CD4-positive, alpha-beta memory T cell (primary cell): ENCODE measurements at regions of chr3 and their contacts with region 1.

Region 1: GRCh38 chr3:17742108-17742879 is at the start of gene TBC1D5:
- DNase-seq: peak; percentile 88 to 92 (median 91)
- H3K4me3 ChIP-seq: peak within 1 kb of the TSS; percentile 38 to 81
- H3K4me3 Mint-ChIP-seq: peak within 1 kb of the TSS; percentile 88 to 94 (median 92)
- H3K27ac ChIP-seq: peak within 1 kb of the TSS; percentile 54
- H3K27ac Mint-ChIP-seq: peak within 1 kb of the TSS; percentile 90 to 95 (median 92)
- H3K4me1 ChIP-seq: peaks cover 39% of the 10 kb centered on the region
- H3K4me1 Mint-ChIP-seq: peaks cover 29 to 53% (median 39%) of the 10 kb centered on the region in 4 donors
- H3K27me3 ChIP-seq: no peaks in the 10 kb centered on the region
- H3K27me3 Mint-ChIP-seq: no peaks in the 10 kb centered on the region
- total RNA-seq, gene TBC1D5: 46.6 to 52.2 TPM

Region 2: GRCh38 chr3:17672506-17672905 is 69.8 kb before region 1 on chr3:
- CTCF ChIA-PET with region 1: no interaction called
- POLR2A ChIA-PET with region 1: no interaction called
- intact Hi-C with region 1: no loop called
- DNase-seq: no peak
- H3K4me3 ChIP-seq: no peak overlapping the region
- H3K4me3 Mint-ChIP-seq: no peak overlapping the region
- H3K27ac ChIP-seq: no peak overlapping the region
- H3K27ac Mint-ChIP-seq: no peak overlapping the region
- H3K4me1 ChIP-seq: no peaks in the 10 kb centered on the region
- H3K4me1 Mint-ChIP-seq: peaks cover 0 to 5% (median 1%) of the 10 kb centered on the region in 4 donors
- H3K27me3 ChIP-seq: no peaks in the 10 kb centered on the region
- H3K27me3 Mint-ChIP-seq: no peaks in the 10 kb centered on the region

Region 3: DNA sequence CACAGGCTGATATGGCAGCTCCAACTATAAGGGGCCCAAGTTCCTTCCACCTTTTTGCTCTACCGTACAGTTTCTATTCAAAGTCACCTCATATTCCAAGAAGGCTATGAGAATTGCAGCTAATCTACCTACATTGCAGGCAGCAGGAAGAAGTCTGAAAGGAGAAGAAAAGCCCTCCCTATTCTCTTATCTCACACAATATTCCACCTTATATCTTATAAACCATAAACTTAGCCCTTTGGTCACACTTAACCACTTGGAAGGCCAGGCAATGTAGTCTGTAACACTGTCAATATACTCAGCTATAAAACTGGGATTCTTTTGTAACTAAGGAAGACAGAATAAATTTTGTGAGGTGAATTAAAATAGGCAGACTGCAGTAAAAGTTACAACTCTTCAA is 54.7 kb before region 1 on chr3:
- CTCF ChIA-PET with region 1: interaction called, 3 read pairs
- POLR2A ChIA-PET with region 1: interaction called, 20 read pairs
- intact Hi-C with region 1: loop called (anchors 2 kb)
- DNase-seq: no peak
- H3K4me3 ChIP-seq: no peak overlapping the region
- H3K4me3 Mint-ChIP-seq: no peak overlapping the region
- H3K27ac ChIP-seq: no peak overlapping the region
- H3K27ac Mint-ChIP-seq: peak overlapping the region in 1 of 7 donors; percentile 4
- H3K4me1 ChIP-seq: no peaks in the 10 kb centered on the region
- H3K4me1 Mint-ChIP-seq: peaks cover 4 to 11% (median 7%) of the 10 kb centered on the region in 4 donors
- H3K27me3 ChIP-seq: no peaks in the 10 kb centered on the region
- H3K27me3 Mint-ChIP-seq: no peaks in the 10 kb centered on the region

Region 4: GRCh38 chr3:17874632-17875031 is 132.3 kb after region 1 on chr3:
- CTCF ChIA-PET with region 1: no interaction called
- POLR2A ChIA-PET with region 1: no interaction called
- intact Hi-C with region 1: no loop called
- DNase-seq: no peak
- H3K4me3 ChIP-seq: no peak overlapping the region
- H3K4me3 Mint-ChIP-seq: no peak overlapping the region
- H3K27ac ChIP-seq: no peak overlapping the region
- H3K27ac Mint-ChIP-seq: no peak overlapping the region
- H3K4me1 ChIP-seq: no peaks in the 10 kb centered on the region
- H3K4me1 Mint-ChIP-seq: no peaks in the 10 kb centered on the region
- H3K27me3 ChIP-seq: no peaks in the 10 kb centered on the region
- H3K27me3 Mint-ChIP-seq: peaks cover 1 to 4% of the 10 kb centered on the region in 2 donors

Region 5: GRCh38 chr3:17891139-17891856 is 149.0 kb after region 1 on chr3:
- CTCF ChIA-PET with region 1: no interaction called
- POLR2A ChIA-PET with region 1: no interaction called
- intact Hi-C with region 1: no loop called
- DNase-seq: no peak
- H3K4me3 ChIP-seq: no peak overlapping the region
- H3K4me3 Mint-ChIP-seq: no peak overlapping the region
- H3K27ac ChIP-seq: no peak overlapping the region
- H3K27ac Mint-ChIP-seq: no peak overlapping the region
- H3K4me1 ChIP-seq: no peaks in the 10 kb centered on the region
- H3K4me1 Mint-ChIP-seq: no peaks in the 10 kb centered on the region
- H3K27me3 ChIP-seq: no peaks in the 10 kb centered on the region
- H3K27me3 Mint-ChIP-seq: peaks cover 2 to 4% of the 10 kb centered on the region in 2 donors

Region 6: DNA sequence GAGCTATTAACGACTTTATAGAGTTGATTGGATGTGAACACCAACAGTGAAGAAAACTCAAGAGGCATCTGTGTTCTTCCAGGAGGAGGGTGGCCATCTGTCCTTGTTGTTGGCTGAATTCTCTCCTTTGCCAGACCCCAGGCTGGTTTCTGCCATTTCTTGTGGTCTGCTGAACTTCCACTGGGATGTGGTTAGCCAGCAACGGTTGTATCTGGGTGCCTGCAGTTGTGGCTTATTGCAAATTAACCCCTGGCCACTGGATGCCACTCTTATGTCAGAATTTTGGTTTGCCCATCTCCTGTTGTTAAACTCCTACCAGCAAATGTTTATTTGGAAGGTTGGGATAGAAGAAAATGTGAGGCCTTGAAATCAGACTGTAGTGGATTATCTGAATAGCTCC is 163.7 kb after region 1 on chr3:
- CTCF ChIA-PET with region 1: no interaction called
- POLR2A ChIA-PET with region 1: no interaction called
- intact Hi-C with region 1: no loop called
- DNase-seq: no peak
- H3K4me3 ChIP-seq: no peak overlapping the region
- H3K4me3 Mint-ChIP-seq: no peak overlapping the region
- H3K27ac ChIP-seq: no peak overlapping the region
- H3K27ac Mint-ChIP-seq: no peak overlapping the region
- H3K4me1 ChIP-seq: no peaks in the 10 kb centered on the region
- H3K4me1 Mint-ChIP-seq: no peaks in the 10 kb centered on the region
- H3K27me3 ChIP-seq: no peaks in the 10 kb centered on the region
- H3K27me3 Mint-ChIP-seq: peaks cover 0 to 4% of the 10 kb centered on the region in 2 donors

Region 7: GRCh38 chr3:18725668-18726407 is 983.5 kb after region 1 on chr3:
- CTCF ChIA-PET with region 1: no interaction called
- POLR2A ChIA-PET with region 1: no interaction called
- intact Hi-C with region 1: loop called (anchors 10 kb)
- DNase-seq: peak; percentile 56 to 74 (median 68)
- H3K4me3 ChIP-seq: peak overlapping the region in 1 of 2 donors; percentile 6
- H3K4me3 Mint-ChIP-seq: peak overlapping the region; percentile 56 to 80 (median 76)
- H3K27ac ChIP-seq: peak overlapping the region; percentile 53
- H3K27ac Mint-ChIP-seq: peak overlapping the region; percentile 92 to 99 (median 94)
- H3K4me1 ChIP-seq: peaks cover 74% of the 10 kb centered on the region
- H3K4me1 Mint-ChIP-seq: peaks cover 64 to 79% (median 72%) of the 10 kb centered on the region in 4 donors
- H3K27me3 ChIP-seq: no peaks in the 10 kb centered on the region
- H3K27me3 Mint-ChIP-seq: no peaks in the 10 kb centered on the region